Activated naive CD4-positive, alpha-beta T cell treated with anti-CD3 and anti-CD28 coated beads for 36 hours (primary cell): ENCODE measurements at regions of chr3 and their contacts with region 1.

Region 1: GRCh38 chr3:53347261-53348064 is at the start of gene DCP1A:
- DNase-seq: peak; percentile 97
- H3K4me3 Mint-ChIP-seq: peak within 1 kb of the TSS; percentile 96
- H3K27ac Mint-ChIP-seq: peak within 1 kb of the TSS; percentile 88
- H3K4me1 Mint-ChIP-seq: peaks cover 25% of the 10 kb centered on the region
- H3K27me3 Mint-ChIP-seq: no peaks in the 10 kb centered on the region
- total RNA-seq, gene DCP1A: 23.8 to 25.0 TPM

Region 2: DNA sequence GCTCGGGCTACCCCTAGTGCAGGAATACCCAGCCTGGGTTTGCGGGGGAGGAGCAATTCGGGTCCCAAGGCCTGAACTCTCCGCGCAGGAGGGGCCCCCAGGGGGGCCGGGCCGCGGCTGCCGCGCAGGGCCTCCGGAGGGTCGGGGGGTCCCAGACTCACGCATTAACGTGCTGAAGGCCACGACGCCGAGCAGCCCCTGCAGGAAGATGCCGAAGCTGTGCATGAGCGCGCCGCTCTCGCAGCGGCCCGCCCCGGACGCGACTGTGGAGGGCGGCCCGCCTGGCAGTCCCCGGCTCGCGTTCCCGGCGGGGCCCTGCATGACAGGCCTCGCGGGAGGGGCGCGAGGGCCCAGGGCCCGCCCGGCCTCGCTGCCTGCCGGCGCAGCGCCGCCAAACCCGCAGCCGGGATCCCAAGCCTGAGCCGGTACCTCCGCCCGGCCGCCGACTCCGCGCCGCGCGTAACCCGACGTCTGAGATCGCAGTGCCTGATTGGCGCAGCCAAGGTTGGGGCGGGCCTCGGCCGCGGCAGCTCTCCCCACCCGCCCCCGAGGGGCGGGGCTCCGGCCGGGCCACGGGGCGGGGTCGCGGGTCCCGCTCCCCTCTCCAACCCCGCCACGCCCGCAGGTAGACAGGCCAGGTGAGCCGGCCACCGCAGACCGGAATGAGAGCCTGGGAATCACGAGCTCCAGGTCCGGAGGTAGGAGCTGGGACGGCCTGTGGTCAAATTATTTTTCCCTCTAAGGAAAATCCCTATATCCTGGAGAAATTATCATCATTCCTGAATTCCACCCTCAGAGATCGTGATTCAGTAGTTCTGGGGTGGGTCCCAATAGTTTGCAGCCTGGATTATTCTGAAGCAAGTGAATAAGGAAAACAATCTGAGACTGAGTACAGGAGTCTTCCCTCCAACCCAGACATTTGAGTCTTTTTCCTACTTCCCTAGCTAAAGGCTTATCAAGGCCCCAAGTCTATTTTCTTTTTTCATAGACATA is 450.0 kb before region 1 on chr3 and contains the start of gene STIMATE:
- CTCF ChIA-PET with region 1: no interaction called
- intact Hi-C with region 1: loop called (anchors 10 kb)
- DNase-seq: peak; percentile 86
- H3K4me3 Mint-ChIP-seq: peak within 1 kb of the TSS; percentile 84
- H3K27ac Mint-ChIP-seq: no peak within 1 kb of the TSS
- H3K4me1 Mint-ChIP-seq: peaks cover 39% of the 10 kb centered on the region
- H3K27me3 Mint-ChIP-seq: no peaks in the 10 kb centered on the region
- total RNA-seq, gene STIMATE: 7.7 to 9.7 TPM

Region 3: DNA sequence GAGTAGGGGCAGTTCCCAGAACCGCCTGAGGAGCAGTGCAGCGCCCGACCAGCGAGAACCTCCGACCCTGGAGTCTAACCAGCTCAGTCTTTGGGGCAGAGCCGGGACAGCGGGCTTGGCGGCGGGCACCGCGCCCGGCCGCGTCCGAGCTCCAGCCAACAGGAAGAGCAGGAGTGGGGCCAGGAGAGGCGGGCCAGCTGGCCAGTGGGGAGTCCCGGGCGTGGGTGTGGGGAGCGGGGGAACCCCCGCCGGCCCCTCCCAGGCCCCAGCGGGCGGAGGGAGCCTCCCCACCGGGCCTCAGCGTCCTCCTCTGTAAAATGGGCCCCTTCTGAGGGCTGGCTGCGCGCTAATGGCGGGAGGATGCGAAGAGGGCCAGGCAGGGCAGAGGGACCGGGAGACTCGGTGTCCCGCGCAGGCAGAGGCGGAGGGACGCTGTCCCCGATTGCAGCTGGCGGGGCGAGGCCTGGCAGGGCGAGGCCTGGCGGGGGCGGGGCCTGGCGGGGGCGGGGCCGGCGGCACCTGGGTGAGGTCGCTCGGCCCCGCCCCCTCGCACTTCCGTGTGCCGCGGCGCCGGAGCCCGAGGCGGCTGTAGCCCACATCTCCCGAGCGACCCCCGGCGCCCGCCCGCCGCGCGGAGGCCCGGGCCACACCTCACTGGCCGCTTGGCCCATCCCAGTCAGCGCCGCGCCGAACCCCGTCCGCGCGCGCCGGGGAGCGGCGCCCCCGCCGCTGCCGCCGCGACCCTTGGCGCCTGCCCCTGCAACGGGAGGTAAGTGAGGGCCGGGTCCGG is 186.6 kb before region 1 on chr3 and contains the start of gene PRKCD:
- CTCF ChIA-PET with region 1: no interaction called
- intact Hi-C with region 1: loop called (anchors 1 kb)
- DNase-seq: peak; percentile 76
- H3K4me3 Mint-ChIP-seq: peak within 1 kb of the TSS; percentile 74
- H3K27ac Mint-ChIP-seq: peak within 1 kb of the TSS; percentile 59
- H3K4me1 Mint-ChIP-seq: peaks cover 18% of the 10 kb centered on the region
- H3K27me3 Mint-ChIP-seq: peaks cover 18% of the 10 kb centered on the region
- total RNA-seq, gene PRKCD: 9.1 to 10.2 TPM

Region 4: GRCh38 chr3:53255775-53256703 is 91.4 kb before region 1 on chr3 and contains the start of gene TKT:
- CTCF ChIA-PET with region 1: no interaction called
- intact Hi-C with region 1: loop called (anchors 1 kb)
- DNase-seq: peak; percentile 85
- H3K4me3 Mint-ChIP-seq: peak within 1 kb of the TSS; percentile 91
- H3K27ac Mint-ChIP-seq: peak within 1 kb of the TSS; percentile 80
- H3K4me1 Mint-ChIP-seq: peaks cover 36% of the 10 kb centered on the region
- H3K27me3 Mint-ChIP-seq: no peaks in the 10 kb centered on the region
- total RNA-seq, gene TKT: 316 to 322 TPM

Region 5: GRCh38 chr3:53320697-53321096 is 26.8 kb before region 1 on chr3:
- CTCF ChIA-PET with region 1: no interaction called
- intact Hi-C with region 1: loop called (anchors 1 kb)
- DNase-seq: no peak
- H3K4me3 Mint-ChIP-seq: no peak overlapping the region
- H3K27ac Mint-ChIP-seq: no peak overlapping the region
- H3K4me1 Mint-ChIP-seq: peaks cover 8% of the 10 kb centered on the region
- H3K27me3 Mint-ChIP-seq: no peaks in the 10 kb centered on the region